OCI-LY7 (cell line): ENCODE measurements at regions of chr1 and their contacts with region 1.

Region 1: DNA sequence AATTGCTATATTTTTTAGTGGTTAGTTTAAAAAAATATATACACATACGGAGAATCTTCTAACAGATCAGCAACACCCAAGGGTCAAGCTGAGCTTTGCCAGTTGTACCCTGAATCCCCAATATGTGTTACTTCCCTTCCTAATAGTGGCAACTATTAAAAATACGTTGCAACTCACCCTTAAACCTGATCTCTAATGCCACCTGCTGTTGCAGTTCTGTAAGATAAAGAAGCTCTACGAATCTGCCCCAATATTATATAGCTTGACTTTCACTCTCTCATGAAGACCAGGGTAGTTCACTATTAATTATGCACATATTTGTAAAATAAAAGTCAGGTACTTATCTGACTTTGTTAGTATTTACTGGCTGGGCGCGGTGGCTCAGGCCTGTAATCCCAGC is 58.4 kb downstream of the ASH1L start:
- DNase-seq: peak; percentile 66
- H3K4me3 ChIP-seq: no peak overlapping the region
- H3K27ac ChIP-seq: no peak overlapping the region
- H3K4me1 ChIP-seq: peaks cover 52% of the 10 kb centered on the region
- CTCF ChIP-seq: peak; percentile 79

Region 2: DNA sequence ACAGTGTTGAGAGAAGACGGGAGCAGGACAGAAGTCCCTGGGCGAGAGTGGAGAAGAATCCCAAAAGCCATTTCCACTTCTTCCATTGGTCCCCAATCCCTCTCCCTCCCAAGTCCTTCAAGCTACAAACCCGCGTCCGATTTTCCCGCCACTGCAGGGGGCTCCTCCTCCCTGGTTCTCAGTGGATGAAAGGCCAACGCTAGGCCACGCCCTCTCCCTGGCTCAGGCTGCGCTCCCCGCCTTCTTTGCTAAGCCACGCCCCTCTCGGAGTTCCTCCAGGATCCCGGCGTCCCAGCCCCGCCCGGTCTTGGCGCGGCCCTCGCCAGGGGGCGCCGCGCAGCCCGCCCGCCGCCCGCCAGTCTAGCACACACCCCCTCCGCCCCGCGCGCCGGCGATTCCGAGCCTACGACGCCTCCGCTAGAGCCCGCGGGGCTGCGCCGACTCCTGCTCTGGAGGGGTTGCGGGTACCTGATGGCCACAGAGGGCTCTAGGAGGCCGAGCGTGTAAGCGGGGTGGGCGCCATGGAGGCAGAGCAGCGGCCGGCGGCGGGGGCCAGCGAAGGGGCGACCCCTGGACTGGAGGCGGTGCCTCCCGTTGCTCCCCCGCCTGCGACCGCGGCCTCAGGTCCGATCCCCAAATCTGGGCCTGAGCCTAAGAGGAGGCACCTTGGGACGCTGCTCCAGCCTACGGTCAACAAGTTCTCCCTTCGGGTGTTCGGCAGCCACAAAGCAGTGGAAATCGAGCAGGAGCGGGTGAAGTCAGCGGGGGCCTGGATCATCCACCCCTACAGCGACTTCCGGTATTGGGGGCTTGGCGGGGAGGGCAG is 226.9 kb before region 1 on chr1 and contains the start of gene HCN3:
- CTCF ChIA-PET with region 1: no interaction called
- POLR2A ChIA-PET with region 1: interaction called, 5 read pairs
- intact Hi-C with region 1: loop called (anchors 10 kb)
- DNase-seq: peak; percentile 98
- H3K4me3 ChIP-seq: peak within 1 kb of the TSS; percentile 82
- H3K27ac ChIP-seq: peak within 1 kb of the TSS; percentile 21
- H3K4me1 ChIP-seq: peaks cover 39% of the 10 kb centered on the region
- CTCF ChIP-seq: peak; percentile 79
- total RNA-seq, gene HCN3: 4.9 and 6.7 TPM in 2 replicates

Region 3: DNA sequence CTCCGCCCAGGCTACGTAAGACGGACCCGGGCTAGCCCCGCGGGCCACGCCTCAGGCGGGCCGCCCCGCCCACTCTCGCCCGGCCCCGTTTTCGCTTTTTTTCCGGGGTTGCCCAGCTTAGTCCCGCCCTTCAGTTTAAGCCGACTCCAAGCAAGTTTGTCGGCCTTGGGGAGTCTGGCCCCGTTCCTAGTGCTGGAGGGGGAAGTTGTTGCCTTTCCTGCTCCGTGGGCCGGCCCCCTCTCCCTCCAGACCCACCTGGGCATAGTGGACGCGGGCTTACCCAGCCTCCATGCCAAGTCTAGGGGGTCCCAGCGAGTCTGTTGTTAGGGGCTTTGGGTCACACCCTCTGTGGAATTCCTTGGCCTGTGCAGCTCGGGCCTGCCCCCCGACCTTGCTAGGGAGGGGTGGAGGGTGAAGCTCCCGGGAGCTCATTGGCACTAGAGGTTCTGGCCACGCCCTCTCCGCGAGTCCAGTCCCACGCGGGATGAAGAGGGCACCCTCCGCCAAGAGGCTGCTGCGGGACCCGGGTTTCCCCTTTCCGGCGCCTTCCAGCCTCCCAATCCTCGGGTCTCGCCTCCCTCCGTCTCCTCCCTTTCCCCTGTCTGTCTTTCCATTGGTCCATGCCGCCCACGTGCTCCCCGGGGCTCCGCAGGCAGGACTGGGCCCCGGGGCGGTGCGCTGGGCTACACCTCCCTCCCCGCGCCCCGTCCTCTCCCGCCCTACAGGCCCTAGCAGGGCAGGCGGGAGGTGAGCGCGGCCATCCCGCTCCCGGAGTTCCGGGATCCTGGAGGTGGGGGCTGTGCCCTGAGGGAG is 180.2 kb before region 1 on chr1:
- CTCF ChIA-PET with region 1: interaction called, 6 read pairs
- POLR2A ChIA-PET with region 1: no interaction called
- intact Hi-C with region 1: loop called (anchors 1 kb)
- DNase-seq: peak; percentile 83
- H3K4me3 ChIP-seq: peak overlapping the region; percentile 78
- H3K27ac ChIP-seq: peak overlapping the region; percentile 53
- H3K4me1 ChIP-seq: peaks cover 23% of the 10 kb centered on the region
- CTCF ChIP-seq: no peak

Region 4: GRCh38 chr1:155562581-155563376 is 58.6 kb after region 1 on chr1 and contains the start of gene ASH1L:
- CTCF ChIA-PET with region 1: no interaction called
- POLR2A ChIA-PET with region 1: no interaction called
- intact Hi-C with region 1: loop called (anchors 5 kb)
- DNase-seq: peak; percentile 94
- H3K4me3 ChIP-seq: peak within 1 kb of the TSS; percentile 86
- H3K27ac ChIP-seq: peak within 1 kb of the TSS; percentile 79
- H3K4me1 ChIP-seq: peaks cover 30% of the 10 kb centered on the region
- CTCF ChIP-seq: no peak
- total RNA-seq, gene ASH1L: 33.2 and 34.4 TPM in 2 replicates

Region 5: DNA sequence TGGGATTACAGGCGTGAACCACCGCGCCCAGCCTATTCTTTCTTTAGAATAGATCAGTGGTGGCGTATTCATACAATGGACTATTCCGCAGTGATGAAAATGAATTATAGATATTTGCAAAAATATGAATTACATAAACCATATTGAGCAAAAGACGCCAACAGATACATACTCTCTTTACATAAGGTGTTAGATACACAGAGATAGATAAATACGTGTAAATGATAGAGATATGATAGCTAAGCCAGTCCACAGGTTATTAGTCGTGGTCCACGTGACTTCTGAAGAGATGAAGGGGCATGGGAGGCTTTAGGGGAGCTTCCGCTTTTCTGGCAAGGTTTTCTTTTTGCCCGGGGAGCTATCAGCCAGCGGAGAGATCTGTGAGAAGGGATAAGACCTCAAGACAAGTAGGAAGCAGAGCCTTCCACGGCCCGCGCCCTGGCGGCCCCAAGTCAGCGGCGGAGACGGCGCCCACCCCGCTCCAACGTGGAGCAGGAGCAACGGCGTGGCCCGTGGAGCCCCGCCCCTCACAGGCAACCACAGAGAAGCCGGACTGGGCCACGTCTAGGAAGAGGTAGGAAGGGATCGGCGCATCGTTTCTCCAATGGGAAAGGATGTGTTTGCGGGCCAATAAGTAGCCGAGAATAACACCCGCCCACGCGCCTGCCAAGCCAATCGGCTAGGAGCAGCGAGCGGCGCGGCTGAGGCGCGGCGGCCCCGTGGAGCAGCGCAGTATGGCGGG is 105.5 kb after region 1 on chr1 and contains the start of gene MSTO1:
- CTCF ChIA-PET with region 1: no interaction called
- POLR2A ChIA-PET with region 1: no interaction called
- intact Hi-C with region 1: no loop called
- DNase-seq: peak; percentile 96
- H3K4me3 ChIP-seq: peak within 1 kb of the TSS; percentile 79
- H3K27ac ChIP-seq: peak within 1 kb of the TSS; percentile 76
- H3K4me1 ChIP-seq: no peaks in the 10 kb centered on the region
- CTCF ChIP-seq: no peak
- total RNA-seq, gene MSTO1: 68.6 and 76.1 TPM in 2 replicates

Region 6: DNA sequence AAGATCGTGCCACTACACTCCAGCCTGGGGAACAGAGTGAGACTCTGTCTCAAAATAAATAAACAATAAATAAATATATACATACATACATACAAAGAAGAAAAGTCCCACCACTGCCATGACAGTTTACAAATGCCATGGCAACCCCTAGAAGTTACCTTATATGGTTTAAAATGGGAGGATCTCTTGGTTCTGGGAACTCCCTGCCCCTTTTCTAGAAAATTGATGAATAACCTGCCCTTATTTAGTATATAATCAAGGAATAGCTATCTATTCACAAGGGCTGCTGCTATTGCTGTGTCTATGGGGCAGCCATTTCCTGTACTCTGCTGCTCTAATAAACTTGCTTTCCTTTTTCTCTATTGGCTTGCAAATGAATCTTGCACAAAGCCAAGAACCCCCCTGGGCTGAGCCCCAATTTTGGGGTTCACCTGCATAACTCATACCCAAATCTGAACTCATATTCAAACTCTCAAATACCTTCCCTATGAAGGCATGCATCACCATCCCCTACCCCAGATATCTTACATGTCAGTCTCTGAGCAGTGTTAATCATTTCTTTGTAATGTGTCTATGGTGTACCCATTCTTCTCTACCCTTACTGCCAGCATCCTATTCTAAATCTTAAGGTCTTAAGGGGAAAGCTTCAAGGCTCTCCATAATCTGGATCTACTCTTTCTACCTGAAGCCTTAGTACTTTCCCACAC is 343.8 kb after region 1 on chr1:
- CTCF ChIA-PET with region 1: no interaction called
- POLR2A ChIA-PET with region 1: no interaction called
- intact Hi-C with region 1: no loop called
- DNase-seq: no peak
- H3K4me3 ChIP-seq: no peak overlapping the region
- H3K27ac ChIP-seq: peak overlapping the region; percentile 1
- H3K4me1 ChIP-seq: peaks cover 42% of the 10 kb centered on the region
- CTCF ChIP-seq: no peak